CD4-positive, alpha-beta T cell (primary cell): ENCODE measurements at regions of chr11 and their contacts with region 1.

Region 1: DNA sequence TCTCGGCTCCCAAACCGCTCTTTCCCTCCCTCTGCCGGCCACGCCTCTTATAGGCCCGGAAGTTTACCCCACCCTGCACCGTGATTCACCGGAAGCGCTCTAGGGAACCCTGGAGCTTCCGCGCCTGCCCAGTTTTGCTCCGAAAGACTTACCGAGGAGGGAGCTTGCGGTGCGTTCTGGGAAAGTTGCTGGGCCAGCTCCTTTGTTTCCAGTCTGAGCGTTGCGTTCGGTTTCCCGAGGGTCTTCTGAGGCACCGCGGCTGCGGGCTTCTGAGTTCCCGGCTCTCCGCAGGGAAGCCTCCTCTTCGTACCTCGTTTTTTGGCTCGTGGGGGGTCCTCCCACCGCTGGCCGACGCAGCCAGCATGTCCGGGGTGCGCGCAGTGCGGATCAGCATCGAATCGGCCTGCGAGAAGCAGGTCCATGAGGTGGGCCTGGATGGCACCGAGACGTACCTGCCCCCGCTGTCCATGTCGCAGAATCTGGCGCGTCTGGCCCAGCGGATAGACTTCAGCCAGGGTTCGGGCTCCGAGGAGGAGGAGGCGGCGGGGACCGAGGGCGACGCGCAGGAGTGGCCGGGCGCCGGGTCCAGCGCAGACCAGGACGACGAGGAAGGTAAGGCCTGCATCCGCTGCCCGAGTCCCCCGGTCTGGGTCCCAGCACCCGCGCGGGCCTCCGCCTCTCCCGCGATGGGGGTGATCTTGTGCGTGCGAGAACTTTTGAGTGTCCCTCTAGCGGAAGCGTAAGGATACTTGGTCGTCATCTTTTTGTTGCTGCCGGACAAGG is at the start of gene MED17:
- DNase-seq: peak; percentile 79 to 95 (median 86)
- ATAC-seq: peak; percentile 96
- H3K4me3 ChIP-seq: peak within 1 kb of the TSS; percentile 97
- H3K4me3 Mint-ChIP-seq: peak within 1 kb of the TSS; percentile 89
- H3K27ac ChIP-seq: peak within 1 kb of the TSS; percentile 86 to 90
- H3K27ac Mint-ChIP-seq: peak within 1 kb of the TSS; percentile 81
- H3K4me1 ChIP-seq: peaks cover 32% of the 10 kb centered on the region
- H3K4me1 Mint-ChIP-seq: peaks cover 53% of the 10 kb centered on the region
- H3K27me3 ChIP-seq: no peaks in the 10 kb centered on the region
- H3K27me3 Mint-ChIP-seq: no peaks in the 10 kb centered on the region
- CTCF ChIP-seq: no peak
- total RNA-seq, gene MED17: 63.1 to 63.6 TPM

Region 2: DNA sequence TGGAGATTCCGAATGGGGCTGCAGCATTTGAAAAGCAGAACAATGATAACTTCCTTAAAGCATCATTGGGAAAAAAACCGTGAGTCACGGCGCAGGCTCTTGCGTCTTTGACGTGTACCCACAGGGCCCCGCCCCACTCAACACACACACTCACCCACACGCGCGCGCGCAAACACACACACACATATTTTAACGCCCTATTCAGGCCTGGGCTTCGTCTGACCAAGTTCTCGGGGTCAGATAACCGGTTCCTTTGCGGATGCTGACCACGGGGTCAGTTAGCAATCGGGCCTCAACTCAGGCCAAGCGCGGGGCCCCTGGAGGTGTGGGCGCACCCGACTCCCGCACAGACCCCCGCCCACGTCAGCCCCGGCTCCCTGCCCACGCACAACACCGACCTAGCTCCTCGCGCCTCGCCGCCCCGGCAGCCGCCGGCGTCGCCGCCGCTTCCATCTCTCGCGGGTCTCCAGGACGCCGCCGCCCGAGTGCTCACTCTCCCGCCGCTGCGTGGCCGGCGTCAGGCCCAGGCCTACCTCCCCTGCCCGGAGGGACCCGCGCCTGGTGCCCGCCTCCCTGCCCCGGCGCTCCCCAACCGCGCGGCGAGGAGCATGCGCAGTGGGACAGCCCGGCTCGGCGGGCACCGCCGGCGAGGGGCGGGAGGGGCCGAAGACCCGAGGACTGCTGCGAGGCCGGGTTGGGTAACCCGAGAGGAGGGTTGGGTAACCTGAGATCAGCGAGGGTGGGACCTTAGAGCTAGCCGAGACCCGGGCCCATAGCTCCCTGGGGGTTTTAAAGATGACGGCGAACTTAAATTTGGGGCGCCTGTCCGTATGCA is 586.7 kb before region 1 on chr11 and contains the start of gene SLC36A4:
- CTCF ChIA-PET with region 1: no interaction called
- POLR2A ChIA-PET with region 1: interaction called, 9 read pairs
- intact Hi-C with region 1: loop called in 1 of 2 experiments (anchors 5 kb)
- DNase-seq: peak; percentile 76 to 95 (median 80)
- ATAC-seq: peak; percentile 88
- H3K4me3 ChIP-seq: peak within 1 kb of the TSS; percentile 78
- H3K4me3 Mint-ChIP-seq: peak within 1 kb of the TSS; percentile 94
- H3K27ac ChIP-seq: peak within 1 kb of the TSS; percentile 85 to 90
- H3K27ac Mint-ChIP-seq: peak within 1 kb of the TSS; percentile 97
- H3K4me1 ChIP-seq: peaks cover 6% of the 10 kb centered on the region
- H3K4me1 Mint-ChIP-seq: peaks cover 26% of the 10 kb centered on the region
- H3K27me3 ChIP-seq: no peaks in the 10 kb centered on the region
- H3K27me3 Mint-ChIP-seq: no peaks in the 10 kb centered on the region
- CTCF ChIP-seq: no peak
- total RNA-seq, gene SLC36A4: 15.9 to 16.4 TPM

Region 3: GRCh38 chr11:93234602-93235207 is 549.6 kb before region 1 on chr11:
- CTCF ChIA-PET with region 1: no interaction called
- POLR2A ChIA-PET with region 1: no interaction called
- intact Hi-C with region 1: loop called in 1 of 2 experiments (anchors 1 kb)
- DNase-seq: peak; percentile 44 to 79 (median 60)
- ATAC-seq: peak; percentile 100
- H3K4me3 ChIP-seq: no peak overlapping the region
- H3K4me3 Mint-ChIP-seq: no peak overlapping the region
- H3K27ac ChIP-seq: no peak overlapping the region
- H3K27ac Mint-ChIP-seq: no peak overlapping the region
- H3K4me1 ChIP-seq: no peaks in the 10 kb centered on the region
- H3K4me1 Mint-ChIP-seq: no peaks in the 10 kb centered on the region
- H3K27me3 ChIP-seq: peaks cover 0 to 16% of the 10 kb centered on the region in 2 experiments
- H3K27me3 Mint-ChIP-seq: peaks cover 41% of the 10 kb centered on the region
- CTCF ChIP-seq: peak; percentile 80

Region 4: DNA sequence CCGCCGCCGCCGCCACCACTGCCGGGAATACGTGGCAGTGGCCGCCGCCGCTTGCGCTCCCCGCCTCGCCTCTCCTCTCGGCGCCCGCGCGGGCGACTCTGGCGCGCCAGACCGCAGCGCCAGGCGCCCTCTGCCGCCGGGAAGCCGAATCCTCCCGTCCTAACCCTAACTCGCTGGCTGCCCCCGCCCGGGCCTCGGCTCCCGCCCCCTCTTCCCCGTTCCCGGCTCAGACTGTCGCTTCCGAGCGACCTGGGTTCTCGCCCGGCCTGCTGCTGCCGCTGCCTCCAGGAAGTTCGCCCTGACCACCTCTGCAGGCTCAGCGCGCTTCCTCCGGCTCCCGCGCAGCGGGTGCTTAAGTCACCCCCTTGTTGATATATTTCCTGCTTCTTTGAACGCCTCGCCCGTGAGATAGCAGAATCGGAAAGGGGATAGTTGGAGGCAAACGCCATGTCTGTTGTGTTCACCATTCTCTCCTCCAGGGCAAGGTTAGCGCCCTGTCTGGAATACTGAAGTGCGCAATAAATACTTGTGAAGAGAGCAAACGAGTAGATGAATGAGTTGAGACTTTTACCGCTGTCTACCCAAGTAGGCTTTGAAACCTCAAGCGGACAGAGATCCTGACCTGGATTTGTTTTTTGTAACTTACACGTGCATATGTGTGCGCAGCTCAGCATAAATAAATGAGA is 240.9 kb before region 1 on chr11 and contains the start of gene SMCO4:
- CTCF ChIA-PET with region 1: no interaction called
- POLR2A ChIA-PET with region 1: no interaction called
- intact Hi-C with region 1: loop called in 1 of 2 experiments (anchors 10 kb)
- DNase-seq: peak; percentile 36 to 87 (median 58)
- ATAC-seq: peak; percentile 74
- H3K4me3 ChIP-seq: peak within 1 kb of the TSS; percentile 74
- H3K4me3 Mint-ChIP-seq: peak within 1 kb of the TSS; percentile 98
- H3K27ac ChIP-seq: peak within 1 kb of the TSS; percentile 2 to 43
- H3K27ac Mint-ChIP-seq: peak within 1 kb of the TSS; percentile 85
- H3K4me1 ChIP-seq: peaks cover 24% of the 10 kb centered on the region
- H3K4me1 Mint-ChIP-seq: peaks cover 28% of the 10 kb centered on the region
- H3K27me3 ChIP-seq: no peaks in the 10 kb centered on the region
- H3K27me3 Mint-ChIP-seq: no peaks in the 10 kb centered on the region
- CTCF ChIP-seq: peak; percentile 54
- total RNA-seq, gene SMCO4: 0.30 TPM in 1 of 2 experiments, not detected in the other

Region 5: DNA sequence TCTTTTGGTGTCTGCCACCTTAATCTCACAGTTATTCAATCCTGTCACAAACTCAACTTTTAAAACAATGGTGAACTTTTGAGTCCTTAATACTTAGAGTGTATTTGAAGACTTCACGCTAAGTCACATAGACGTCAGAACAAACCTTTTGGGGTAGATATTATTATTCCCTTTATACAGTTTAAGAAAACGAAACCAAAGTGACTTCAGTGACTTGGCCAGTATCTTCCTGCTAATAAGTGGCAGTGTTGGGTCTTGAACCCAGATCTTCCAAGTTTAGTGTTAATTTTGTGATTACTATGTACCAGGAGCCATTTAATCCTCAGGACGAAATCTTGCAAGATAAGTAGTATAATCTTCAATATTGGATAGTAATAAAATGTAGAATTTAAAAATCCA is 122.2 kb before region 1 on chr11:
- CTCF ChIA-PET with region 1: no interaction called
- POLR2A ChIA-PET with region 1: interaction called, 5 read pairs
- intact Hi-C with region 1: loop called (anchors 1 to 2 kb)
- DNase-seq: no peak
- ATAC-seq: no peak
- H3K4me3 ChIP-seq: peak overlapping the region; percentile 80
- H3K4me3 Mint-ChIP-seq: peak overlapping the region; percentile 85
- H3K27ac ChIP-seq: peak overlapping the region; percentile 80 to 91
- H3K27ac Mint-ChIP-seq: peak overlapping the region; percentile 83
- H3K4me1 ChIP-seq: peaks cover 11% of the 10 kb centered on the region
- H3K4me1 Mint-ChIP-seq: peaks cover 48% of the 10 kb centered on the region
- H3K27me3 ChIP-seq: no peaks in the 10 kb centered on the region
- H3K27me3 Mint-ChIP-seq: no peaks in the 10 kb centered on the region
- CTCF ChIP-seq: no peak

Region 6: DNA sequence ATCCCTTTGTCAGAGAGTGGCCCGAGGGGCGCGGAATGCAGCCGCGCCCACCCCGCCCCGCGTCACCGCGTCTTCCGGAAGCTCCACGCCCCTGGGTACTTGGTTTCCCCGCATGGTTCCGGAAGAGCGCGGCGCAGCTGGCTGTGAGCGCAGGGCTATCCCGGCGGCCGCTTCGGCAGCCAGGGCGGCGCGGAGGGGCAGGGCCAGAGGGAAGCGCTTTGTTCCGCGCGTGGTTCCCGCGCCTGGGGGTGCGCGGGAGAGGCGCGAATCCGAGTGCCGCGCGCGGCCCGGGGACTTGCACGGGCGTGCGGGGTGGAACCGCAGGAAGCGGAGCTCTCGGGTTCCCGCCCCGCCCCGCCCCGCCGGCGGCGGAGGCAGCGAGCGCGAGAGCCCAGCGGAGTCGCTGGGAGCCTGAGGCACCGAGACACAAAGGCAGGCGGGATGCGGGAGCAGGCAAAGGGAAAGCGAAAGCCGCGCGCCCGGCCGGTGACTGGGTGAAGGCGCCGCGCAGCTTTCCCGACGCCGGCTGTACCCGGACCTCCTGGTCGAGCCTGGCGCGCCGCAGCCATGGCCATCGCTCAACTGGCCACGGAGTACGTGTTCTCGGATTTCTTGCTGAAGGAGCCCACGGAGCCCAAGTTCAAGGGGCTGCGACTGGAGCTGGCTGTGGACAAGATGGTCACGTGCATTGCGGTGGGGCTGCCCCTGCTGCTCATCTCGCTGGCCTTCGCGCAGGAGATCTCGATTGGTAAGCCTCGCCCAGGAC is 344.6 kb after region 1 on chr11 and contains the start of gene PANX1:
- CTCF ChIA-PET with region 1: no interaction called
- POLR2A ChIA-PET with region 1: interaction called, 5 read pairs
- intact Hi-C with region 1: loop called in 1 of 2 experiments (anchors 2 kb)
- DNase-seq: peak; percentile 42 to 93 (median 64)
- ATAC-seq: peak; percentile 81
- H3K4me3 ChIP-seq: peak within 1 kb of the TSS; percentile 91
- H3K4me3 Mint-ChIP-seq: peak within 1 kb of the TSS; percentile 93
- H3K27ac ChIP-seq: peak within 1 kb of the TSS; percentile 64 to 90
- H3K27ac Mint-ChIP-seq: peak within 1 kb of the TSS; percentile 90
- H3K4me1 ChIP-seq: peaks cover 47% of the 10 kb centered on the region
- H3K4me1 Mint-ChIP-seq: peaks cover 26% of the 10 kb centered on the region
- H3K27me3 ChIP-seq: no peaks in the 10 kb centered on the region
- H3K27me3 Mint-ChIP-seq: no peaks in the 10 kb centered on the region
- CTCF ChIP-seq: no peak
- total RNA-seq, gene PANX1: 4.8 to 4.9 TPM

Region 7: GRCh38 chr11:94493281-94494125 is 709.2 kb after region 1 on chr11 and contains the starts of genes ANKRD49 and MRE11:
- CTCF ChIA-PET with region 1: no interaction called
- POLR2A ChIA-PET with region 1: interaction called, 3 read pairs
- intact Hi-C with region 1: loop called in 1 of 2 experiments (anchors 5 kb)
- DNase-seq: peak; percentile 91 to 99 (median 95)
- ATAC-seq: peak; percentile 98
- H3K4me3 ChIP-seq: peak within 1 kb of the TSS; percentile 83
- H3K4me3 Mint-ChIP-seq: peak within 1 kb of the TSS; percentile 97
- H3K27ac ChIP-seq: peak within 1 kb of the TSS; percentile 65 to 86
- H3K27ac Mint-ChIP-seq: peak within 1 kb of the TSS; percentile 92
- H3K4me1 ChIP-seq: peaks cover 8% of the 10 kb centered on the region
- H3K4me1 Mint-ChIP-seq: peaks cover 54% of the 10 kb centered on the region
- H3K27me3 ChIP-seq: no peaks in the 10 kb centered on the region
- H3K27me3 Mint-ChIP-seq: no peaks in the 10 kb centered on the region
- CTCF ChIP-seq: no peak
- total RNA-seq, gene ANKRD49: 54.4 to 56.4 TPM
- total RNA-seq, gene MRE11: 17.0 to 18.6 TPM